Caco-2 (cell line): ENCODE measurements at regions of chr6 and their contacts with region 1.

Region 1: DNA sequence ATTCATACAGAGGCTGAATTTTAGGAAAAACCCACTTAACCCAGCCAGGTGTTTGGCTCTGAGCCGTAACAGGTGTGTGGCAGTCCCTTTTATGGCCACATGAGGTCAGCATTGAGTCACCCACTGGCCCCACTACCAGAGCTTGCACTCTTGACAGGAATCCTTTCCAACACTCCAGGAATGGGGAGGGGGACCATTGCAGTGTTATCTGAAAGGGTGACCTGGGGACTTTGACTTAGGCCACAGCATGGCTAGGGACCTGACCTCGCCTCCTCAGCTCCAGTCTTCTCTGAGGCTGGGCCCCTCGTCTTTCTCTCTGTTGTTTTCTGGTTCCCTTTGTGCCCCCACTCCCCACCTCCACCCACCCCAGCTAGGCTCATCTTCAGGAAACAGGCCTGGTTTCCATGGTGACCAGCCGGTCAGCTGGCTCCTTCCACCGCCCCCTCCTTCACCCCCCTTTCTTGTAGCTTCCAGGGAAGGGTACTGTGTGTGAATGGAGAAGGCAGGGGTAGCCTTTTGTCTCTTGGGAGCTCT is 2.1 kb upstream of the TMEM151B start:
- DNase-seq: peak; percentile 70 to 81
- H3K4me3 ChIP-seq: no peak overlapping the region
- H3K4me3 Mint-ChIP-seq: no peak overlapping the region
- H3K27ac Mint-ChIP-seq: no peak overlapping the region
- H3K4me1 ChIP-seq: peaks cover 18% of the 10 kb centered on the region
- H3K4me1 Mint-ChIP-seq: peaks cover 13% of the 10 kb centered on the region
- H3K27me3 ChIP-seq: peaks cover 6% of the 10 kb centered on the region
- H3K27me3 Mint-ChIP-seq: peaks cover 15% of the 10 kb centered on the region
- CTCF ChIP-seq: peak; percentile 84 to 92

Region 2: DNA sequence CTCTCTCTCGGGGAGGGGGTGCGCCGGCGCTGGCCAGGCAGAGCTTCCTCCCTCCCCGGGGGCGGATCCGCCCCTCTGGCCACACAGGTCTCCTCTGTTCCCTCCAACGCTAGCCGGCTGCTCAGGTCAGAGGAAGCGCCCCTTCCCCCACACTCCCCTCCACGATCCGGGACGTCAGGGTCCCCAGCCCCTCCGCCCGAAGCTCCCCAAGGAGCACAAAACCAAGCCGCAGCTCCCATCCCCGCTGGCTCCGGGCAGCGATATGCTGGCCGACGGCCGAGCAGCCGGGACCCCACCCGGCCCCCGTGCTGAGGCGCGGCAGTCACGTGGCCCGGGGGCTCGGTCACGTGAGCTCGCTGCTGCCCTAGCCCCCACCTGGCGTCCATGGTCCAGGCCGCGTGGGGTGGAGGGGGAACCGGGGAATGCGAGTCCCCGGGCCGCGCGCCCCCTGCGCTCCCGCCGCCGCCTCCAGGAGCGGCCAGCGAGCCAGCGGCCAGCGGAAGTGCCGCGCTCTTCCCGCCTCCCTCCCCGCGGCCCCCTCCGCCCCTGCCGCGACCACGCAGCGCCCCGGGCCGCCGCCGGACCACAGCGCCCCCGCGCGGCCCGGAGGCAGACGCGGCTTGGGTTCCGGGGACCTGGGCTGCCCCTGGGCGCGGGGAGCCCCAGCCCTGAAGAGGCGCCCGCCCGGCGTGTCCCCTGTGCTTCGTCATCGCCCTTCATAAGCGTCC is 11.0 kb before region 1 on chr6 and contains the start of gene SLC35B2:
- CTCF ChIA-PET with region 1: interaction called, 18 read pairs
- POLR2A ChIA-PET with region 1: no interaction called
- intact Hi-C with region 1: no loop called
- DNase-seq: peak; percentile 82
- H3K4me3 ChIP-seq: peak within 1 kb of the TSS; percentile 60
- H3K4me3 Mint-ChIP-seq: peak within 1 kb of the TSS; percentile 78
- H3K27ac Mint-ChIP-seq: peak within 1 kb of the TSS; percentile 87
- H3K4me1 ChIP-seq: peaks cover 8% of the 10 kb centered on the region; the same call in 1 of the 2 replicates
- H3K4me1 Mint-ChIP-seq: peaks cover 29% of the 10 kb centered on the region
- H3K27me3 ChIP-seq: no peaks in the 10 kb centered on the region
- H3K27me3 Mint-ChIP-seq: no peaks in the 10 kb centered on the region
- CTCF ChIP-seq: peak; percentile 31 to 66
- total RNA-seq, gene SLC35B2: 44.6 and 44.8 TPM in 2 replicates

Region 3: GRCh38 chr6:44297063-44298038 is 29.2 kb after region 1 on chr6:
- CTCF ChIA-PET with region 1: interaction called, 10 read pairs
- POLR2A ChIA-PET with region 1: no interaction called
- intact Hi-C with region 1: no loop called
- DNase-seq: peak in 1 of 2 experiments; percentile 54
- H3K4me3 ChIP-seq: peak overlapping the region; percentile 49
- H3K4me3 Mint-ChIP-seq: peak overlapping the region; percentile 66
- H3K27ac Mint-ChIP-seq: no peak overlapping the region
- H3K4me1 ChIP-seq: peaks cover 9% of the 10 kb centered on the region; the same call in 1 of the 2 replicates
- H3K4me1 Mint-ChIP-seq: peaks cover 7% of the 10 kb centered on the region
- H3K27me3 ChIP-seq: peaks cover 4% of the 10 kb centered on the region; the same call in 1 of the 2 replicates
- H3K27me3 Mint-ChIP-seq: peaks cover 12% of the 10 kb centered on the region
- CTCF ChIP-seq: no peak

Region 4: GRCh38 chr6:44304282-44305199 is 36.4 kb after region 1 on chr6:
- CTCF ChIA-PET with region 1: interaction called, 5 read pairs
- POLR2A ChIA-PET with region 1: no interaction called
- intact Hi-C with region 1: loop called (anchors 1 kb)
- DNase-seq: peak in 1 of 2 experiments; percentile 54
- H3K4me3 ChIP-seq: no peak overlapping the region
- H3K4me3 Mint-ChIP-seq: no peak overlapping the region
- H3K27ac Mint-ChIP-seq: no peak overlapping the region
- H3K4me1 ChIP-seq: no peaks in the 10 kb centered on the region
- H3K4me1 Mint-ChIP-seq: no peaks in the 10 kb centered on the region
- H3K27me3 ChIP-seq: no peaks in the 10 kb centered on the region
- H3K27me3 Mint-ChIP-seq: no peaks in the 10 kb centered on the region
- CTCF ChIP-seq: peak; percentile 74 to 77

Region 5: DNA sequence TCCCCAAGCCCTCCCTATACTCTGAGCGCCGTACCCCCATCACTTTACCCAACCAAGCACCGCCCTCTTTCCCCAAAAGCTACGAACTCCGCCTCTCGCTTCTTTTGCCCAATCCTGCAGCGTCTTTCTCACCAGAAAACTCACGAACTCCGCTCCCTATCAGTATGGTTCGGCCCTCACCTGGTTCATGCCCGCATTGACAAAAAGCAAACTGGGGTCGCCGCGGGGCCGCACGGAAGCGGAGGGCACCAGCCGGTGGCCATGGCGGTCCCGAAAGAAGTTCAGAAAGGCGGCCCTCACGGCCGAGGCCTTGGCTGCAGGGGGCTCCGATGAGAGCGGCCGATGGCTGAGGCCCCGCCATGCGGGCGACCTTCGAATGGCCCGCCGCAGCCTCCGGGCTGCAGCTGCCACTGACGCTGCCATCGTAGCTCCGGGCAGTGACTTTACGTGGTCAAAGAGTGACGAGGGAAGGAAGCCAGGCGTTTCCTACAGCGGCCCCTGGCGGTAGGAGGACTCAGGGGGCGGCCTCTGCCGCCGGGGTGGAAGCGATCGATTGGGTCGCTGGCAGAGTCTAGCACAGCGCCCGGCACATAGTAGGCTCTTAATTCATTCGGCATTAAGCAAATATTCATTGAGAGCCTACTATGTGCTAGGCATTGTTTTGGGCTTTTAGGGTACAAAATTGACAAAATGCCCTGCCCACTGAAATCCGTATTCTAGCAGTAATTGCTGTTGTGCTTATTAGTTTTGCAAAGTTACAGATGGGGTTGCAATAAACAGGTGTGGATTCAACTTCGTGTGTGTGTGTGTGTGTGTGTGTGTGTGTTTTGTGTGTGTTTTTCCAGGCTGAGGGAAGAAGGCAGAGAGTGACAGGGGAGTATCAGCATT is 45.0 kb after region 1 on chr6 and contains the start of gene AARS2:
- CTCF ChIA-PET with region 1: interaction called, 16 read pairs
- POLR2A ChIA-PET with region 1: no interaction called
- intact Hi-C with region 1: no loop called
- DNase-seq: peak; percentile 89 to 94
- H3K4me3 ChIP-seq: peak within 1 kb of the TSS; percentile 62
- H3K4me3 Mint-ChIP-seq: peak within 1 kb of the TSS; percentile 98
- H3K27ac Mint-ChIP-seq: peak within 1 kb of the TSS; percentile 94
- H3K4me1 ChIP-seq: no peaks in the 10 kb centered on the region
- H3K4me1 Mint-ChIP-seq: no peaks in the 10 kb centered on the region
- H3K27me3 ChIP-seq: no peaks in the 10 kb centered on the region
- H3K27me3 Mint-ChIP-seq: peaks cover 6% of the 10 kb centered on the region
- CTCF ChIP-seq: peak; percentile 90 to 98
- total RNA-seq, gene AARS2: 18.8 and 20.5 TPM in 2 replicates

Region 6: GRCh38 chr6:44338228-44339122 is 70.3 kb after region 1 on chr6:
- CTCF ChIA-PET with region 1: interaction called, 23 read pairs
- POLR2A ChIA-PET with region 1: no interaction called
- intact Hi-C with region 1: loop called (anchors 1 kb)
- DNase-seq: peak; percentile 51 to 68
- H3K4me3 ChIP-seq: no peak overlapping the region
- H3K4me3 Mint-ChIP-seq: no peak overlapping the region
- H3K27ac Mint-ChIP-seq: no peak overlapping the region
- H3K4me1 ChIP-seq: no peaks in the 10 kb centered on the region
- H3K4me1 Mint-ChIP-seq: no peaks in the 10 kb centered on the region
- H3K27me3 ChIP-seq: no peaks in the 10 kb centered on the region
- H3K27me3 Mint-ChIP-seq: peaks cover 3% of the 10 kb centered on the region
- CTCF ChIP-seq: peak; percentile 65 to 84